Activated CD4-positive, alpha-beta memory T cell treated with anti-CD3 and anti-CD28 coated beads, Interleukin-2, amount 10 ng/mL, durations not matched to agents 7 days and 5 days (primary cell): ENCODE measurements at regions of chr6 and their contacts with region 1.

Region 1: DNA sequence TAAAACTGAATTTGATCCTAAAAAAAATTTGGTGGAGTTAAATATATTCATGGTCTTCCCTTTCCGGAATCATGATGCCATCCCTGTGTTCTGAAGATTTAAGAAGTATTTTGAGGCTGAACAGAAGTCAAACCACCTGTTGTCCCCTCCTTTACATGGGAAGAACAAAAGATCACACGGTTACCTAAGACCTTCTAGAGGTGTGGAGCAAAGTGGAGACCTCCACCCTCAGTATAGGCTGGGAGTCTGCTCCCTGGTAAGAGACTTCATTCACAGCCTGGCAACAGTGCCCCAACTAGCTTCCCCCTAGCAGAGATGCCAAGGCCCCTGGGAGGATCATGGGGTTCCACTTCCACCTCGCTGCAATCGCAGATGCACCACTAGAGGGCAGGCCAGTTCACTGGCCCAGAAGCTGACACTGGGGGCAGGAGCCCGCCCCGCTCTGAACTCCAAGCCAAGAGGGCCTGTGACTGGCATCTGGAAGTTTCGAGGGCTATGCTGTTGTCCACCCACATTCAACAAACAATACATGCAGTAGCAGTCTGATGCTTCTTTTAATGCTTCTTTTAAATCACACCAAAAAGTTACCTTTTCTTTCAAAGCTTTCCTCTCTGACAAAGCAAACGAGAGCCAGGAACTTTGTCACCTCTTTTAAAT is 19.5 kb upstream of the UBE2J1 start:
- DNase-seq: peak; percentile 81
- H3K4me3 Mint-ChIP-seq: no peak overlapping the region
- H3K27ac Mint-ChIP-seq: peak overlapping the region; percentile 67
- H3K4me1 Mint-ChIP-seq: peaks cover 34% of the 10 kb centered on the region
- H3K27me3 Mint-ChIP-seq: peaks cover 3% of the 10 kb centered on the region

Region 2: DNA sequence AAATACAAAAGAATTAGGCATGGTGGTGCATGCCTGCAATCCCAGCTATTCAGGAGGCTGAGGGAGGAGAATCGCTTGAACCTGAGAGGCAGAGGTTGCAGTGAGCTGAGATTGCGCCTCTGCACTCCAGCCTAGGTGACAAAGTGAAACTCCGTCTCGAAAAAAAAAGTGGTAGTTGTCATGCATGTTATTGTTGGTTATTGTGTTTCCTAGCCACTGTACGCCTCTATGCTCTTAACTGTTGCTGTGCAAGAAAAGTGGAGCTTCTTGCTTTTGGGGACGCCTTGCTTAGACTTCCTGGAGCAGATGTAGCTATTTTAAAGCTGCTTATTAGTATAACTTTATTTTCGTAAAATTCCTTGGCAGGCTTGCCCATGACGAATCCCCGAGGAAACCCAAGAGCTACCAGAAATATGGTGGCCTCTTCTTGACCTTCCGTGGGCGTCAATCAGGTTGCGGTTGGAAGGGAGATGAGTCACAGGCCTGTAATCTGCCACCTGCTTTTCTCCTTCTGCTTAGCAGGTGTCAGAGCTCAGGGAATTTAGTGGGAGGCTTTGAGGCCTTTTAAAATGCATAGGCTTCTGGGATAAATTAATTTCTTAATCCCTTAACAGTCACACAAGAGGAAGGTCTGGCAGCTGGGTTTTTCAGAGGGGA is 74.2 kb before region 1 on chr6:
- CTCF ChIA-PET with region 1: interaction called, 17 read pairs
- POLR2A ChIA-PET with region 1: interaction called, 9 read pairs
- DNase-seq: peak; percentile 86
- H3K4me3 Mint-ChIP-seq: peak overlapping the region; percentile 65
- H3K27ac Mint-ChIP-seq: peak overlapping the region; percentile 87
- H3K4me1 Mint-ChIP-seq: peaks cover 30% of the 10 kb centered on the region
- H3K27me3 Mint-ChIP-seq: no peaks in the 10 kb centered on the region

Region 3: DNA sequence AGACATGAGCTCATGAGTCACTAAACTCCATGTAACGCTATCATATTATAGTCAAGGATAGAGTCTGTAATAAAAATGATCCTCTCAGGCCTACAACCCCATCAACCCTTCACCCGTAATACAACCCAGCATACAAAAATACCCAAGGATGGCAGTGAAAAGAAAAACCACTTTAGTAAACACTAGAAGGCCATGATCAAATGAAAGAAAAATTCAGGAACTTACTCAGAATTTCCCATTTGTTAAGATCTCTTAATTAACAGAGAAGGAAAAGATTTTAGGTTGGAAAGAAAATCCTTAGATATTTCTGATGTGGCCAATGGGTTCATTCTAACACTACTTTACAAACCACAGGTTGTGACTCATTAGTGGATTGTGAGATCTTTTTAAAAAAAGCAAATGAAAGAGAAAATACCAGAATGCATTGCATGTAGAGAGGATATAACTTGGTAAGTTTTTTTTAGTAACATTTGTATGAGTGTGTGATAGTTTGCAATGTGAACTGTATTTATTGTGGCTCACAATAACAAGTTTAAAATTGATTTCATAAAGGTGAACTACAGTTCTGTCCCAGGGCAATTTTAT is 11.5 kb before region 1 on chr6:
- CTCF ChIA-PET with region 1: interaction called, 72 read pairs
- POLR2A ChIA-PET with region 1: interaction called, 8 read pairs
- DNase-seq: no peak
- H3K4me3 Mint-ChIP-seq: no peak overlapping the region
- H3K27ac Mint-ChIP-seq: peak overlapping the region; percentile 33
- H3K4me1 Mint-ChIP-seq: peaks cover 57% of the 10 kb centered on the region
- H3K27me3 Mint-ChIP-seq: no peaks in the 10 kb centered on the region

Region 4: DNA sequence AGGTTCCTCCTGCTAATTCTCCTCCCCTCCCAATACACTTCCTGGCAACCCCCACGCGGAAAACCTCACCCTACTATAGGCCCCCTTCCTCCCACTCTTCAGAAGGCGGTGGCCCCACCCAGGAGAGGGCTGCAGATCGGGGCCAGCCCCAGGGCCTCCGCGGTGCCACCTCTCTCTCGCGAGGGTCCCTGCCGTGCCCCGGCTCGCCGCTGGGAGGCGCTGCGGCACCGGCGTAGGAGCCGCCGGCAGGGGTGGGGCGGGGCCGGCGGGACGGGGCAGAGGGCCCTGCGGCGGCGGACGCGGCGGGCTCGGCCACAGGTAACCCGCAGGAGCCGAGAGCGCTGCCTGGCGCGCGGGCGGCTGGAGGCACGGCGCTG is 60.9 kb after region 1 on chr6 and contains the start of gene ANKRD6:
- CTCF ChIA-PET with region 1: interaction called, 14 read pairs
- POLR2A ChIA-PET with region 1: interaction called, 3 read pairs
- DNase-seq: peak; percentile 83
- H3K4me3 Mint-ChIP-seq: peak within 1 kb of the TSS; percentile 75
- H3K27ac Mint-ChIP-seq: peak within 1 kb of the TSS; percentile 42
- H3K4me1 Mint-ChIP-seq: peaks cover 13% of the 10 kb centered on the region
- H3K27me3 Mint-ChIP-seq: peaks cover 45% of the 10 kb centered on the region
- total RNA-seq, gene ANKRD6: 4.2 to 4.8 TPM